K562 (cell line): ENCODE measurements at regions of chrX and their contacts with region 1.

Region 1: DNA sequence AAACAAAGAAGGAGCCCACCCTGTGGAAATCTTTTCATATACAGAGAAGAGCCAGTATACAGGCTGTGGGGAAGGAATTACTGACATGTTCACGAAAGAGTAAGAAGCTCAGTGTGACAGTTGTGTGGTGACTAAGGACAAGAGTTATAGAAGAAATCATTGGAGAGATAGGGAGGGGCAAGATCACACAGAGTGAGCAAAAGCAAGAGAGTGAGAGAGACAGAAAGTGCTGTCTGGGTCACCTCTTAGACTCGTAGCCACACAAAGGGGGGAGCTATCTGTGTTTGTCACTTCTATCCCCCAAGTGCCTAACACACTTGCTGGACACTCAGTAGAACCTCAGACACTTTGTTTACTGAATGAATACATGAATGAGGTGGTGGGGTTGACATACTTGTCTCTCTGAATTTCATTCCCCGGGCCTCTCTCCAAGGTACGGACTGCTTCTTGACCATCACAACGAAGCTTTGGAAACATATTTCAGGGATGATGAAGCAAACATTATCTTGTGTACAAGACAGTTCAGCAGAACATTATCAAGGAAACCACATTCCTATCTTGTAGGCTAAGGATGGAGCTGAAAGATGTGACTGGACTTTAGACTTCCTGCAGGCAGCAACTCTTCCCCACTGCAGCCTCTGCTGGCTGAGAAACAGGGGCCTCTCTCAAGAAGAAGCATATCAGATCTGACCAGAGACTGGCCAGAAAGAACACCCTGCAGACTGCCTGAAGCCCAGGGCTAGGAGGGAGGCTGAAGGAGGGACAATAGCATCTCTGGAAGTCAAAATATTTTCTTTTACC is 168.2 kb downstream of the AMELX start:
- DNase-seq: peak; percentile 27 to 92 (median 60)
- ATAC-seq: peak; percentile 91
- H3K4me3 ChIP-seq: peak overlapping the region; percentile 17; the same call in 1 of the 2 replicates
- H3K27ac ChIP-seq: peak overlapping the region; percentile 94
- H3K4me1 ChIP-seq: peaks cover 10 to 53% of the 10 kb centered on the region in 2 experiments; a peak in 4 of 5 replicates
- H3K27me3 ChIP-seq: no peaks in the 10 kb centered on the region
- CTCF ChIP-seq: peak in 1 of 3 experiments; percentile 27; a peak in 2 of 6 replicates
- EP300 ChIP-seq: peak; percentile 96
- POLR2A ChIP-seq: no peak; the same call in 1 of the 2 replicates
- RAD21 ChIP-seq: peak; percentile 12 to 25; a peak in 1 of 4 replicates

Region 2: GRCh38 chrX:9980927-9981326 is 1480.5 kb before region 1 on chrX:
- CTCF ChIA-PET with region 1: no interaction called
- POLR2A ChIA-PET with region 1: no interaction called
- in situ Hi-C with region 1: no loop called
- intact Hi-C with region 1: no loop called
- DNase-seq: no peak
- ATAC-seq: no peak
- H3K4me3 ChIP-seq: no peak overlapping the region
- H3K27ac ChIP-seq: no peak overlapping the region
- H3K4me1 ChIP-seq: no peaks in the 10 kb centered on the region
- H3K27me3 ChIP-seq: peaks cover 0 to 14% of the 10 kb centered on the region in 2 experiments; a peak in 2 of 5 replicates
- CTCF ChIP-seq: no peak
- EP300 ChIP-seq: no peak
- POLR2A ChIP-seq: no peak
- RAD21 ChIP-seq: no peak

Region 3: GRCh38 chrX:11143931-11144678 is 317.3 kb before region 1 on chrX:
- CTCF ChIA-PET with region 1: no interaction called
- POLR2A ChIA-PET with region 1: no interaction called
- in situ Hi-C with region 1: no loop called
- intact Hi-C with region 1: loop called (anchors 5 kb)
- DNase-seq: peak; percentile 39 to 81 (median 53)
- ATAC-seq: peak; percentile 93
- H3K4me3 ChIP-seq: no peak overlapping the region
- H3K27ac ChIP-seq: no peak overlapping the region
- H3K4me1 ChIP-seq: no peaks in the 10 kb centered on the region; a peak in 2 of 5 replicates
- H3K27me3 ChIP-seq: no peaks in the 10 kb centered on the region
- CTCF ChIP-seq: peak; percentile 48 to 74 (median 65); a peak in 5 of 6 replicates
- EP300 ChIP-seq: no peak
- POLR2A ChIP-seq: no peak
- RAD21 ChIP-seq: peak; percentile 71 to 78

Region 4: GRCh38 chrX:11367609-11368430 is 93.6 kb before region 1 on chrX:
- CTCF ChIA-PET with region 1: no interaction called
- POLR2A ChIA-PET with region 1: no interaction called
- in situ Hi-C with region 1: no loop called
- intact Hi-C with region 1: loop called (anchors 5 kb)
- DNase-seq: peak; percentile 62 to 93 (median 66)
- ATAC-seq: peak; percentile 82
- H3K4me3 ChIP-seq: no peak overlapping the region
- H3K27ac ChIP-seq: peak overlapping the region; percentile 90
- H3K4me1 ChIP-seq: peaks cover 0 to 62% of the 10 kb centered on the region in 2 experiments; a peak in 3 of 5 replicates
- H3K27me3 ChIP-seq: no peaks in the 10 kb centered on the region
- CTCF ChIP-seq: no peak
- EP300 ChIP-seq: peak; percentile 99
- POLR2A ChIP-seq: peak; percentile 44; the same call in 1 of the 2 replicates
- RAD21 ChIP-seq: peak in 1 of 2 experiments; percentile 24; a peak in 2 of 4 replicates

Region 5: DNA sequence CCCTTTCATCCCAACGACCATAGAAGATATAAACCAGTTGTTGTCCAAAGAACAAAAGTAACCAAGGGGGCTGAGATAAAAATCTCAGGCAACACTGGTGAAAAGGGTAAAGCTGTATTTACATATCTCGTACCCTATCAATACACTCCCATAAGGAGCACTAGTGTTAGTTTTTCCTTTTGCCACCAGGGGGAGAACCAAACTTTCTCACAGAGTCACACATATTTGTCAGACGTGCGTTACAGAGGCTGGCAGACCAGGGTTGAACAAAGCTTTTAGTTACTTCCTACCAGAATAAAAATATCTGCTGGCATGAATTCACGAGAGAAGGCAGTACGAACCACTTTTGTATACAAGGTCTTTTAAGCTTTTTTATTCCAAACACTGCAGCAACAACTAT is 79.9 kb before region 1 on chrX:
- CTCF ChIA-PET with region 1: no interaction called
- POLR2A ChIA-PET with region 1: no interaction called
- in situ Hi-C with region 1: no loop called
- intact Hi-C with region 1: loop called (anchors 2 kb)
- DNase-seq: peak; percentile 31 to 84 (median 36)
- ATAC-seq: peak; percentile 88
- H3K4me3 ChIP-seq: no peak overlapping the region
- H3K27ac ChIP-seq: peak overlapping the region; percentile 8; the same call in 1 of the 3 replicates
- H3K4me1 ChIP-seq: peaks cover 10 to 54% of the 10 kb centered on the region in 2 experiments
- H3K27me3 ChIP-seq: no peaks in the 10 kb centered on the region
- CTCF ChIP-seq: peak; percentile 67 to 72 (median 72)
- EP300 ChIP-seq: no peak
- POLR2A ChIP-seq: no peak
- RAD21 ChIP-seq: peak; percentile 61 to 83

Region 6: GRCh38 chrX:11423362-11423818 is 38.0 kb before region 1 on chrX:
- CTCF ChIA-PET with region 1: no interaction called
- POLR2A ChIA-PET with region 1: interaction called, 3 read pairs
- in situ Hi-C with region 1: no loop called
- intact Hi-C with region 1: loop called (anchors 2 kb)
- DNase-seq: peak; percentile 34 to 89 (median 56)
- ATAC-seq: peak; percentile 64
- H3K4me3 ChIP-seq: peak overlapping the region; percentile 11; the same call in 1 of the 2 replicates
- H3K27ac ChIP-seq: peak overlapping the region; percentile 92
- H3K4me1 ChIP-seq: peaks cover 13 to 62% of the 10 kb centered on the region in 2 experiments
- H3K27me3 ChIP-seq: no peaks in the 10 kb centered on the region
- CTCF ChIP-seq: no peak
- EP300 ChIP-seq: peak; percentile 74
- POLR2A ChIP-seq: peak; percentile 73
- RAD21 ChIP-seq: no peak

Region 7: DNA sequence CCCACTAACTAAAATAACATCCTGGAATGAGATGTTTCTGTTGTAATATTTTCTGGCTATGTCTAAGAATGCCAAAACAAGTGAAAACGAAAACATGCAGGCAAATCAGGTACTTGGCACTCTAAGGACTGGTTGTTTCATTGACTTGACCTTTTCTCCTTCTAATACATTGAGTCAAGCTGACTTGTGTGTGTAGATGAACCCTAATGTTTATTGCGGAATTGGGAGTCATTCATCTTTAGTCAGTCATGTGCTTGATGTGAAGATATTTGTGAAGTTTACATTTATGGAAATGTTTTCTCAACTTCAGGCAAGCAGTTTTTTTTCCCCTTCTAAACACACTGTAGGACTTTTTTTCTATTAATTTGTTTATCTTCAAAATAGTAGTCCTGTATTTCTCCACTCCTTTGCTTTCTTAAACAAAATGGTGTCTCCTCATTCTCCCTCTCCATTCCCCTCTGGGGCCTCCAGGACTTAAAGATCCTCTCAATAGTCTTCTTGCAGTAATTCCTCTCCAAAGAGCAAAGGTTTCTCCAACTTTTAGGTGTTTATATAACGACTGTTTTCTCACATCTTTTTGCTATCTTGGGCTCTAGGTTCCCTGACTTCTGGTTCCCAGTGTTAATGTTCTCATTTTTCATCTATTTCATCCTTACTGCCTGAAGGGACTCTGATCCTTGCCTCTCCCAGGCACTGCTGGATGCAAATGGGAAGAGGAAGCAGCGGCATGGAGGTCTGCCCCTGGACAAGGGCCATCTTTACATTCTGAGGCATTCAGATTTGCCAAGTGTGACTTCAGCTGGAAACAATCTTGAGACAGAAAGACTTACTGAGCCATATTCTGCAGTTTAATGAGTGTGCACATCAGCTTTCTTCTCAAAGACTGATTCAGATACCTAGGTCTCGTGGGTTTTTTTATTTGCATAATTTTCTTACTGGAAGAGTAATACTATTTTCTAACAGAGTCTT is 38.0 kb after region 1 on chrX:
- CTCF ChIA-PET with region 1: no interaction called
- POLR2A ChIA-PET with region 1: no interaction called
- in situ Hi-C with region 1: no loop called
- intact Hi-C with region 1: loop called (anchors 5 kb)
- DNase-seq: no peak
- ATAC-seq: peak; percentile 47; the same call in 2 of the 3 replicates
- H3K4me3 ChIP-seq: no peak overlapping the region
- H3K27ac ChIP-seq: no peak overlapping the region
- H3K4me1 ChIP-seq: peaks cover 0 to 3% of the 10 kb centered on the region in 2 experiments; a peak in 3 of 5 replicates
- H3K27me3 ChIP-seq: no peaks in the 10 kb centered on the region
- CTCF ChIP-seq: no peak
- EP300 ChIP-seq: no peak
- POLR2A ChIP-seq: no peak
- RAD21 ChIP-seq: no peak

Region 8: DNA sequence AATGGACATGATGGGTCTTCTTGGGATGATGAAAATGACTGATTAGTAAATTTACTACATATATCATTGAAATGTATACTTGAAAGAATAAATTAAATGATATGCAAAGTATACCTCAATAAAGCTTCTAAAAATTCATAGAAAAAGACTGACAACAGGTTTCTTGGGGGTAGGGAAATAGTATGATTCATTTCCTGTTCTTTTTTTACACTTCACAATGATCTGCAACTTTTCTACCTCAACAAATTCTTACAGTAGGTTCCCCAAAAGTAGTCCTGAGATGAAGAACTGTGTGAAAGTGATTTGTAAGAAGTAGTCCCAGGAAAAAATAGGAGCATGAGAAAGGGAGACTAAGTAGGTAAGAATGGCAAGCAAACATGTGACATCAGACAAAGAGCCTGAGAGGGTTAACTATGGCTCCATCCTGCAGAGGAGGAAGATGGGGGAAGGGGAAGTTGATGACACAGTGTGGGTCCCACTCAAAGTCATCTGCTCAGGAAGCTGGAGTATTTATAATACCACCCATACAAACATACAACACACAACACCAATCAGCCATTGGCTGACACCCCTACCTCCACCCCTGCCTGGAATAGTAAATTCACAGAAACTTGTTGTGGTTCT is 130.4 kb after region 1 on chrX:
- CTCF ChIA-PET with region 1: no interaction called
- POLR2A ChIA-PET with region 1: no interaction called
- in situ Hi-C with region 1: no loop called
- intact Hi-C with region 1: no loop called
- DNase-seq: no peak
- ATAC-seq: peak; percentile 47
- H3K4me3 ChIP-seq: no peak overlapping the region
- H3K27ac ChIP-seq: peak overlapping the region; percentile 52; the same call in 2 of the 3 replicates
- H3K4me1 ChIP-seq: peaks cover 0 to 20% of the 10 kb centered on the region in 2 experiments; a peak in 3 of 5 replicates
- H3K27me3 ChIP-seq: no peaks in the 10 kb centered on the region
- CTCF ChIP-seq: no peak
- EP300 ChIP-seq: no peak
- POLR2A ChIP-seq: no peak
- RAD21 ChIP-seq: no peak

Region 9: DNA sequence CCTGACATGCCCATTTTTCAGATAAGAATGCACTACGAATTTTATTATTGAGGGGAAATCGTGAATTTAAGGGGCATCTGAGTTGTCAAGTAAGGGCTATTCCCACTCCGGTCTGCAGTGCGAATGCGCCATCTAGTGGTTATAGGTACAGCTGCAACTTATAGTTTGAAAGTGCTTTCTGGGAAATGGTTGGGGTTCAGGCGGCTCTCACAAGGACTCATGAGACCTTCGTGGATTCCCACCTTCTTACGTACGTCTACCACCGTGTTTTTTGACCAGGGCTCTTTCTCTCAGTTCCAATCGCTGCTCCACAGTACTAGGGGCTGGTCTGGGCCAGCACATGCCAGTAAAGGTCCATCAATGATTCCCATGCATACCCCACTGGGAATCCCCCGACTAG is 308.9 kb after region 1 on chrX:
- CTCF ChIA-PET with region 1: no interaction called
- POLR2A ChIA-PET with region 1: no interaction called
- in situ Hi-C with region 1: no loop called
- intact Hi-C with region 1: loop called (anchors 10 kb)
- DNase-seq: peak; percentile 64 to 70 (median 66)
- ATAC-seq: peak; percentile 97
- H3K4me3 ChIP-seq: no peak overlapping the region
- H3K27ac ChIP-seq: no peak overlapping the region
- H3K4me1 ChIP-seq: peaks cover 0 to 3% of the 10 kb centered on the region in 2 experiments; a peak in 2 of 5 replicates
- H3K27me3 ChIP-seq: no peaks in the 10 kb centered on the region
- CTCF ChIP-seq: peak; percentile 82 to 93 (median 89)
- EP300 ChIP-seq: no peak
- POLR2A ChIP-seq: no peak
- RAD21 ChIP-seq: peak; percentile 80 to 84